Activated T-helper 2 cell treated with anti-CD3 and anti-CD28 coated beads, Interferon-gamma antibody, Interleukin-2, Interleukin-4, amounts not matched to agents 10 μg/mL and 5 μg/mL and 100 μg/mL, durations not matched to agents 14 hours and 24 hours and 36 hours (primary cell): ENCODE measurements at regions of chr3 and their contacts with region 1.

Region 1: GRCh38 chr3:152524198-152525140 is 255.7 kb downstream of the MBNL1 start:
- DNase-seq: no peak
- H3K4me3 Mint-ChIP-seq: no peak overlapping the region
- H3K27ac Mint-ChIP-seq: no peak overlapping the region
- H3K4me1 Mint-ChIP-seq: peaks cover 1% of the 10 kb centered on the region
- H3K27me3 Mint-ChIP-seq: peaks cover 3% of the 10 kb centered on the region

Region 2: DNA sequence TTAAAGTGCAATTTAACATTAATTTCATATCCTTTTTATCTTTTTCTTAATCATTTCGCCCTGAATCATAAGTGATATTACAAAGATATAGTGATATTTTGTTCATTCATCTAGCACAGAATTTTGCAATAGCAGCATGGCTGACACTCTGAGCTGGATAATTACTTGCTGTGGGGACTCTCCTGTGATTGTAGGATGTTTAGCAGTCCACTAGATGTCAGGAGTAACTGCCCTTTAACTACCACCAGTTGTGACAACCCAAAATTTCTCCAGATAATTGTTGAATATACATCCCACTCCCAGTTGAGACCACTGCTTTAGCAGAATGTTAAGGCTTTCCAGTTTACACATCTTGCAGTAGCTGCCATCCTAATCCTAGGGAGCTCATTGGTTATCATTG is 452.5 kb before region 1 on chr3:
- intact Hi-C with region 1: loop called (anchors 5 kb)
- DNase-seq: no peak
- H3K4me3 Mint-ChIP-seq: no peak overlapping the region
- H3K27ac Mint-ChIP-seq: no peak overlapping the region
- H3K4me1 Mint-ChIP-seq: peaks cover 5% of the 10 kb centered on the region
- H3K27me3 Mint-ChIP-seq: peaks cover 3% of the 10 kb centered on the region

Region 3: DNA sequence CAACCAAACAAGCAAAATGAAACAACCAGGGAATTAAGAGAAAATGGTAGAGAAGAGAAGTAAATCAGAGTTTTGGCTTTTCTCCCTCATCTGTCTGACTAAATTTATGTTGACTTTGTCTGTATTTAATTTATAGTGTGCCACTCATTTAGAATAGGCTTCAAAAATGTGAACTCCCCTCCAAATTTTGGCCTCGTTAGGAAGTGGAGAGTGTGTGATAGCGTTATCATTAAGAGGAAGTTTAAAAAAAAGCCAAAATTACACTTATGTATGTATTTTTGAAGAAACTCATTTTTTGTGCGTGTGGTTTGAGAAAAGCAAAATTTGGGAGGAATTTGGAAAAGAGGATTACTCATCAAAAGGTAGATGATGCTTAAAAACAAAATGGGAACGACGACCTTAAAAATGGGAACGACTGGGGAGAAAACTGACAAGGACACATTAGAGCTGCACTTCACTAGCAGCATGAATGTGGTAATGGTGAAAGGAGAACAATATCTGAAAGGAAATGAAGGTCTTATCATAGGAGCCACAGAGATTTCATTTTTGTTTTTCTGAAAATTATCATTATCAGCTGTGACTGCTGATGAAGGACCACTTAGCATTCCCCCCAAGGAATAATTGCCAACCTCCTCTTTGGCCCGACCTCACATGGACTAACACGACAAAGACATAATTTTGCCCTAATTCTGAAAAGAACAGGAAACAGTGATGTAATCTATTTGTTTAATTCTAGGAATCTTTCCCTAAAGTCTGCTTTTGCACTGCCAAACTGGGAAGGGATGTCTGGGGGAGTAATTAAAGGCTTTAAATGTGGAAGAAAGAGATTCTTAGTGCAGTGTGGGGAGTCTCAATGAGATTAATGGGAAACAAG is 147.2 kb after region 1 on chr3:
- intact Hi-C with region 1: no loop called
- DNase-seq: no peak
- H3K4me3 Mint-ChIP-seq: no peak overlapping the region
- H3K27ac Mint-ChIP-seq: no peak overlapping the region
- H3K4me1 Mint-ChIP-seq: peaks cover 7% of the 10 kb centered on the region
- H3K27me3 Mint-ChIP-seq: peaks cover 26% of the 10 kb centered on the region